Psoas muscle (tissue), 8 donors: ENCODE measurements at regions of chr10 and their contacts with region 1.

Region 1: GRCh38 chr10:689433-690371 is at the start of gene DIP2C:
- DNase-seq: peak; percentile 84 to 88
- ATAC-seq: peak; percentile 72 to 81 (median 79)
- H3K4me3 ChIP-seq: peak within 1 kb of the TSS; percentile 90
- H3K27ac ChIP-seq: peak within 1 kb of the TSS; percentile 84
- H3K4me1 ChIP-seq: peaks cover 6% of the 10 kb centered on the region
- H3K27me3 ChIP-seq: no peaks in the 10 kb centered on the region
- CTCF ChIP-seq: no peak
- total RNA-seq, gene DIP2C: 25.0 to 32.0 (median 30.4) TPM

Region 2: GRCh38 chr10:387909-388660 is 301.6 kb before region 1 on chr10:
- intact Hi-C with region 1: no loop called
- DNase-seq: no peak
- ATAC-seq: no peak
- H3K4me3 ChIP-seq: no peak overlapping the region
- H3K27ac ChIP-seq: no peak overlapping the region
- H3K4me1 ChIP-seq: peaks cover 7% of the 10 kb centered on the region
- H3K27me3 ChIP-seq: no peaks in the 10 kb centered on the region
- CTCF ChIP-seq: no peak

Region 3: DNA sequence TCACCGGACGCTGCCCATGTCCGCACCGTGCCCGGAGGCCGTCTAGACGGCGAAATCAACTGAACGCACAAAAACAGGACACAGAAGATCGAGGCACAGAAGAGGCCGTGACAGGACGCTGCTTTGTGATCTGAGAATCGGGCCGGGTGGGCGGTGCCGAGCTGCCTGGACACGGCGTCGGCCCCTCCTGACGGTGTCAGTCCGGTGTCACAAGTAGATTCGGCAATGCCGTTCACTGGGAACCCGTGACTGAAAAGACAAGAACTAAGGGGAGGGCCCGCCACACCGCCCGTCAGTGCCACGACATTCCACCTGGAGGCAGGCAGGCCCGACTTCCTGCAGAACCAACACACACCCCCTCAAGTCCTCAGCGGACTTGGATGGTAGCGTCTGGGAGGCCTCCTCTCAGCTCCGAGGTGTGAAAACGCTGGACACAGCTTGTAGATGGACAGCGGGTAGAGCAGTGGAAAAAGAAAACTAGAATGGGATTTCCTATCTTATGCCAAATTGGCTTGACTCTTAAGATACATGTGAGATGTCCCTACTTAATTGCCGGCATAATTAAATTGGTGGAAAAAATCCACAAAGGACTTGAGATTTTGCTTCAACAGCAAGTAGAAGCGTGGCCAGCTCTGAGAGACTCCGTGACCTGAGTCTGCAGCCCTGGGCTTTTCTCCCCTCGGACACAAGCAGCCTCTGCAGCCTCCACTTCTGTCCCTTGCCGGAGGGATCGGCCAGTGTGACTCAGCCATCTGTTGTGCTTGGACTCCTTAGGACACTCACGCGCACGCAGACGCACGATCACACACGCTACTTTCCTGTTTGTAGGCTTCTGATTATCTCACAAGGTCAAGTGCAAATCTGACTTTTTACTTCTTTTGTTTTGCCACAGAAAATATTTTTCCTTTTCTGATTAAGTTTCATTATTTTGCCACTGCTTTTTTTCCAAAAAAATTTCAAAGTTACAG is 269.3 kb before region 1 on chr10:
- intact Hi-C with region 1: loop called in 1 of 2 experiments (anchors 10 kb)
- DNase-seq: peak in 1 of 2 donors; percentile 45
- ATAC-seq: peak in 1 of 4 donors; percentile 49
- H3K4me3 ChIP-seq: no peak overlapping the region
- H3K27ac ChIP-seq: no peak overlapping the region
- H3K4me1 ChIP-seq: no peaks in the 10 kb centered on the region
- H3K27me3 ChIP-seq: no peaks in the 10 kb centered on the region
- CTCF ChIP-seq: no peak

Region 4: GRCh38 chr10:484441-484924 is 205.2 kb before region 1 on chr10:
- intact Hi-C with region 1: no loop called
- DNase-seq: peak; percentile 40 to 70
- ATAC-seq: peak; percentile 38 to 60 (median 52)
- H3K4me3 ChIP-seq: peak overlapping the region; percentile 73
- H3K27ac ChIP-seq: peak overlapping the region; percentile 75
- H3K4me1 ChIP-seq: peaks cover 56% of the 10 kb centered on the region
- H3K27me3 ChIP-seq: no peaks in the 10 kb centered on the region
- CTCF ChIP-seq: no peak